ENCODE measurements at regions of chr1 and their contacts with region 1.

Region 1: GRCh38 chr1:18581420-18581880 is 49.2 kb upstream of the PAX7 start:
- DNase-seq: peak; percentile 8
- H3K4me3 ChIP-seq: no peak overlapping the region
- H3K27ac ChIP-seq: no peak overlapping the region
- H3K4me1 ChIP-seq: no peaks in the 10 kb centered on the region
- H3K27me3 ChIP-seq: no peaks in the 10 kb centered on the region
- CTCF ChIP-seq: peak; percentile 68 to 84
- POLR2A ChIP-seq: no peak

Region 2: GRCh38 chr1:17696417-17697301 is 884.8 kb before region 1 on chr1:
- CTCF ChIA-PET with region 1: interaction called, 5 read pairs
- POLR2A ChIA-PET with region 1: no interaction called
- dilution Hi-C with region 1: no loop called
- intact Hi-C with region 1: loop called (anchors 1 kb)
- DNase-seq: peak; percentile 43
- H3K4me3 ChIP-seq: no peak overlapping the region
- H3K27ac ChIP-seq: no peak overlapping the region
- H3K4me1 ChIP-seq: no peaks in the 10 kb centered on the region
- H3K27me3 ChIP-seq: no peaks in the 10 kb centered on the region
- CTCF ChIP-seq: peak; percentile 25 to 51
- POLR2A ChIP-seq: no peak

Region 3: GRCh38 chr1:18100491-18101063 is 480.9 kb before region 1 on chr1:
- CTCF ChIA-PET with region 1: no interaction called
- POLR2A ChIA-PET with region 1: no interaction called
- dilution Hi-C with region 1: no loop called
- intact Hi-C with region 1: loop called (anchors 5 kb)
- DNase-seq: peak; percentile 20
- H3K4me3 ChIP-seq: no peak overlapping the region
- H3K27ac ChIP-seq: no peak overlapping the region
- H3K4me1 ChIP-seq: no peaks in the 10 kb centered on the region
- H3K27me3 ChIP-seq: no peaks in the 10 kb centered on the region
- CTCF ChIP-seq: peak; percentile 53 to 70
- POLR2A ChIP-seq: no peak

Region 4: DNA sequence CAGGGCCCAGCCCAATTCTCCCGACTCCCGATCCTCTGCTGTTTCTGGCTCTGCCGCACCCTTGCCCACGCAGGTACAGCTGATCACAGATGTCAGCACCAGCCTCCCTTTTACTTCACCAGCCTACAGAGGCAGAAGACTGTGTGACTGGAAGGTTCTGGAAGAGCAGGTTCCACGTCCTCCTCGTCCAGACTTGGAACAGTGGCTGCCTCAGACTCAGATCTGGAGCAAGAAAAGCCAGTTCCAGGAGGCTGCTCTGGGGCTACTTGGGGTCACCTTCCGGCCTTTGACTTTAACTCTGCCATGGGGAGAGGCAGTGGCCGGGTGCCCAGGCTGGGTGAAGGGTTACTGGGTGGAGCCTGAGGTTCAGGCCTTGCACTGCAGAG is 116.8 kb before region 1 on chr1:
- CTCF ChIA-PET with region 1: no interaction called
- POLR2A ChIA-PET with region 1: no interaction called
- dilution Hi-C with region 1: no loop called
- intact Hi-C with region 1: no loop called
- DNase-seq: no peak
- H3K4me3 ChIP-seq: no peak overlapping the region
- H3K27ac ChIP-seq: no peak overlapping the region
- H3K4me1 ChIP-seq: no peaks in the 10 kb centered on the region
- H3K27me3 ChIP-seq: no peaks in the 10 kb centered on the region
- CTCF ChIP-seq: no peak
- POLR2A ChIP-seq: no peak

Measured in endothelial cell of umbilical vein (primary cell).